Activated B cell treated with CpG ODN at 0.5 μM for 24 hours (primary cell): ENCODE measurements at regions of chr2 and their contacts with region 1.

Region 1: GRCh38 chr2:168237741-168238140 is 9.7 kb downstream of the STK39 start:
- DNase-seq: no peak
- ATAC-seq: no peak
- H3K4me3 Mint-ChIP-seq: no peak overlapping the region
- H3K27ac Mint-ChIP-seq: no peak overlapping the region
- H3K4me1 Mint-ChIP-seq: peaks cover 7% of the 10 kb centered on the region
- H3K27me3 Mint-ChIP-seq: no peaks in the 10 kb centered on the region
- CTCF ChIP-seq: no peak

Region 2: DNA sequence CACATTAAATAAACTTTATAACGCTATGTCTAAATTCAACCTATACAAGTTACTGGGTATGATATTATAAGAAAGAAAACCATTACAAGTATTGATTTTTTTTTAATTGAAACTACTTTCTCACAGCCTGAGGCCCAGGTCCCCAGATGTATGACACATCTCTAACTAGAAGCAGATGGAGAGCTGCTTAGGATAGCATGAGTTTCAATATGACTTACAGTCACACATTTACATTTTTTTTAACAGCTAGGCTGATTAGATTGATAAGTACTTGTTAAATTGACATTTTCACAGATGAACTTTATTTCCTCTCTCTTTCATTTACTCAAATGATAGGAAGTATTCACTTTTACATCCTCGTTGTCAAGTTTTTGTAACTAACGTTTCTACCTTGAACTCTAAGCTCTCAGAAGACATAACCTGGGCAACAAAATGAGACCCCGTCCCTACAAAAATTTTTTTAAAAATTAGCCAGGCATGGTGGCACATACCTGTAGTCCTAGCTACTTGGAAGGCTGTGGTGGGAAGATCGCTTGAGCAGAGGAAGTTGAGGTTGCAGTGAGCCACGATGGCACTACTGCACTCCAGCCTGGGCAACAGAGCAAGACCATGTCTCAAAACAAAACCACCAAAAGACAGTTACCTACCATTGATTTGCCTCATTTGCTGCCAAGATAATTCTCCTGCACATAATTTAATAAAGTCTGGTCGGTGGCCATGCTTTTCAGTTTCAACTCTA is 42.8 kb before region 1 on chr2:
- CTCF ChIA-PET with region 1: no interaction called
- POLR2A ChIA-PET with region 1: no interaction called
- intact Hi-C with region 1: no loop called
- DNase-seq: peak; percentile 33
- ATAC-seq: peak; percentile 84
- H3K4me3 Mint-ChIP-seq: peak overlapping the region; percentile 79
- H3K27ac Mint-ChIP-seq: peak overlapping the region; percentile 97
- H3K4me1 Mint-ChIP-seq: peaks cover 53% of the 10 kb centered on the region
- H3K27me3 Mint-ChIP-seq: no peaks in the 10 kb centered on the region
- CTCF ChIP-seq: no peak

Region 3: DNA sequence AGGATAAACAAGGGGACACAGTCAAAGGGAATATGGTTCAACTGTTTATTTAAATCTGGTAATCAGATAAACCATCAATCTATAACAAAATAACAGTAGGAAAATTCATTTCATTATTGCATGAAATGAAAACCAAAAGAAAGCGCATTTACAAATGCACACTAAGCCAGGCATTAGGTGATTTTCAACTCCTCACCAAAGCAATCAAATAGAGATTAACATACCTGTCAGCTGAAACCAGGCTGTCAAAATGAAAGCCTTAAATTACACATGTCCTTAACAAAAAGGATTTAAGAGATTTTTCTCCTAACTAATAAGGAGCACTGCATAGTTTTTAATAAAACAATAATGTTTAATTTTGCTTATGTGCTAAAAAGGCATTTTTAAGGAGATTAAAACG is 13.4 kb before region 1 on chr2:
- CTCF ChIA-PET with region 1: no interaction called
- POLR2A ChIA-PET with region 1: no interaction called
- intact Hi-C with region 1: loop called (anchors 2 kb)
- DNase-seq: no peak
- ATAC-seq: no peak
- H3K4me3 Mint-ChIP-seq: no peak overlapping the region
- H3K27ac Mint-ChIP-seq: no peak overlapping the region
- H3K4me1 Mint-ChIP-seq: peaks cover 2% of the 10 kb centered on the region
- H3K27me3 Mint-ChIP-seq: no peaks in the 10 kb centered on the region
- CTCF ChIP-seq: no peak

Region 4: GRCh38 chr2:168254158-168254935 is 16.6 kb after region 1 on chr2:
- CTCF ChIA-PET with region 1: no interaction called
- POLR2A ChIA-PET with region 1: no interaction called
- intact Hi-C with region 1: no loop called
- DNase-seq: no peak
- ATAC-seq: no peak
- H3K4me3 Mint-ChIP-seq: no peak overlapping the region
- H3K27ac Mint-ChIP-seq: no peak overlapping the region
- H3K4me1 Mint-ChIP-seq: no peaks in the 10 kb centered on the region
- H3K27me3 Mint-ChIP-seq: no peaks in the 10 kb centered on the region
- CTCF ChIP-seq: no peak

Region 5: DNA sequence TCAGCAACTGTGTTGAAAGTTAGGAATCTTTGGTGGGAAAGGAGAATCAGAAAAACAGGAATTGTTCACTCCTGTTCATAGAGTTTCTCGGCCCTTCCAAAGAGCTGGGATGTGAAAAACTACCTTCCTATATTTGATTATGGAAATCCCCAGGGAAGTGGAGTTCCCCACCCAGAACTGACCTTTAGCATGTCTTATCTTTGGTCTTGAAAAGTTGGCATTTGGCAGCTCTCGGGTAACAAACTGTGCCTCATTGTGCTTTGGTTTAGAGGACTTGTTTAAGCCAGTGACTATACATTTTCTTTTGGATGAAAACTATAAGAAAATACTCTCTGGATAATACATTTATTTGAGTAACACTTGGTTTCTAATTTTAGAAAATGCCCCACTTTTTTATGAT is 167.0 kb after region 1 on chr2:
- CTCF ChIA-PET with region 1: no interaction called
- POLR2A ChIA-PET with region 1: no interaction called
- intact Hi-C with region 1: no loop called
- DNase-seq: no peak
- ATAC-seq: no peak
- H3K4me3 Mint-ChIP-seq: no peak overlapping the region
- H3K27ac Mint-ChIP-seq: no peak overlapping the region
- H3K4me1 Mint-ChIP-seq: no peaks in the 10 kb centered on the region
- H3K27me3 Mint-ChIP-seq: peaks cover 13% of the 10 kb centered on the region
- CTCF ChIP-seq: no peak